Common myeloid progenitor, CD34-positive (primary cell): ENCODE measurements at regions of chr7 and their contacts with region 1.

Region 1: GRCh38 chr7:44973610-44974401 is 5.0 kb downstream of the MYO1G start:
- DNase-seq: peak in 2 of 3 donors; percentile 46 to 55
- H3K4me3 ChIP-seq: no peak overlapping the region
- H3K27ac ChIP-seq: peak overlapping the region in 1 of 2 experiments; percentile 22
- H3K4me1 ChIP-seq: peaks cover 0 to 42% (median 30%) of the 10 kb centered on the region in 4 experiments
- H3K27me3 ChIP-seq: no peaks in the 10 kb centered on the region

Region 2: DNA sequence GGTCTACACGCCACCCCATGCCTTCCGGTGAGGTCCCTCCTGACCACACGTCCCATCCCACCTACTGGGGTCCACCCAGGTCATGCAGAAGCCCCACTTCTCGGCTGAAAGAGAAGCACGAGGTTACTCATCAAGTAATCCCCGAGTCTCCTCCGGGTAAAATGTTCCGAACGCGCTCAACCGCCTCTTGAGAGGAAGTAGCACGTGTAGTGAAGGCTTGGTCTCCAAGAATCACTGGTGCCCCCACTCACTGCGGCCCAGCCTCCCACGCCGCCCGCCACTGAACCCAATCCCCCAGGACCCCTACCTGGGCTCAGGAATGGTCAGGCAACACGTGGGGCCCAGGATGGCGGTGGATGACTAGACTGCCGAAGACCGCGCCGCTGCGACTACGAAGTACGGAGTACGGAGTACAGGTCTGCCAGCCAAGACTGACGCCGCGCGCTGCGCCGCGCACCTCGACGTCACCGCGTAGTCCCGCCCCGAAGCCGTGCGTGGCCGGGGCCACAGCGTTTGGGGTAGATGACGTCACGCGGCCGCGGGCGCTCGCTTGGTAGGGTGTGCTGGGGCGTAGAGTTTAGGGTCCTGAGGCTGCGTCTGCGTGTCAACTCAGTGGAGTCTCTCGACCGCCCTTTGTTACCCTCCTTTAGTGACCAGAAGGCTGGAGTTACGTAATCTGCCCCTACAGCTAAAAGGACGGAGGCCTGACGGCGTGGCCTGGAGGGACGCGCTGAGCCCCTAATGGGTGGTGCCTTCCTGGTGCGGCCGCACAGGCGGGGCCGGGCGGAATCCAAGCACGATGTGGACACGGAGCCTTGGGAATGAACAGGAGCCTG is 12.6 kb after region 1 on chr7:
- CTCF ChIA-PET with region 1: interaction called, 48 read pairs
- POLR2A ChIA-PET with region 1: interaction called, 3 read pairs
- DNase-seq: peak; percentile 96 to 98 (median 97)
- H3K4me3 ChIP-seq: peak overlapping the region; percentile 46 to 99 (median 81)
- H3K27ac ChIP-seq: peak overlapping the region; percentile 93 to 97
- H3K4me1 ChIP-seq: peaks cover 6 to 67% (median 46%) of the 10 kb centered on the region in 4 experiments
- H3K27me3 ChIP-seq: no peaks in the 10 kb centered on the region

Region 3: DNA sequence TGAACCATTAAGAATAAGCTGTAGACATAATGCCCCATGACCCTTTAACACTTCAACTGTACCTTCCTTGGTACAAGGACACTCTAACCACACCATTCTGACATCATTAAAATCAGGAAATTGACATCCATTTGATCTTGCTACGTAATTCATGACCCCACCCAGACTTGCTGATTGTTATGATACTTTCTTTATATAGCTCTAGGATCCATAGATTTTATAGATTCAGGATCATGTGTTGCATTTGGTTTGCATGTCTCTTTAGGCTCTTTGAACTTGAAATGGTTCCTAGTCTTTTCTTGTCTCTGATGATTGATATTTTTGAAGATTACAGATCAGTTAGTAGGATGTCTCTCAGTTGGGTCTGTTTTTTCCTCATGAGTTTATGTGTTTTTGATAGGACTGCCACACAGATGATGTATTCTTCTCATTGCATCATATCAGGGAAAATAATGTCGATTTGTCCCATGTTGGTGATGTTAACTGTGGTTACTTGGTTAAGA is 39.7 kb after region 1 on chr7:
- CTCF ChIA-PET with region 1: interaction called, 14 read pairs
- POLR2A ChIA-PET with region 1: no interaction called
- DNase-seq: no peak
- H3K4me3 ChIP-seq: no peak overlapping the region
- H3K27ac ChIP-seq: no peak overlapping the region
- H3K4me1 ChIP-seq: peaks cover 0 to 2% (median 0%) of the 10 kb centered on the region in 4 experiments
- H3K27me3 ChIP-seq: no peaks in the 10 kb centered on the region

Region 4: GRCh38 chr7:45026984-45027773 is 53.4 kb after region 1 on chr7:
- CTCF ChIA-PET with region 1: interaction called, 138 read pairs
- POLR2A ChIA-PET with region 1: interaction called, 9 read pairs
- DNase-seq: peak; percentile 84 to 95 (median 92)
- H3K4me3 ChIP-seq: peak overlapping the region; percentile 68 to 99 (median 93)
- H3K27ac ChIP-seq: peak overlapping the region; percentile 89 to 90
- H3K4me1 ChIP-seq: peaks cover 12 to 68% (median 58%) of the 10 kb centered on the region in 4 experiments
- H3K27me3 ChIP-seq: no peaks in the 10 kb centered on the region

Region 5: GRCh38 chr7:45122975-45123860 is 149.4 kb after region 1 on chr7:
- CTCF ChIA-PET with region 1: interaction called, 10 read pairs
- POLR2A ChIA-PET with region 1: no interaction called
- DNase-seq: no peak
- H3K4me3 ChIP-seq: no peak overlapping the region
- H3K27ac ChIP-seq: no peak overlapping the region
- H3K4me1 ChIP-seq: peaks cover 0 to 8% (median 0%) of the 10 kb centered on the region in 4 experiments
- H3K27me3 ChIP-seq: no peaks in the 10 kb centered on the region